ENCODE measurements at regions of chr13 and their contacts with region 1.

Region 1: DNA sequence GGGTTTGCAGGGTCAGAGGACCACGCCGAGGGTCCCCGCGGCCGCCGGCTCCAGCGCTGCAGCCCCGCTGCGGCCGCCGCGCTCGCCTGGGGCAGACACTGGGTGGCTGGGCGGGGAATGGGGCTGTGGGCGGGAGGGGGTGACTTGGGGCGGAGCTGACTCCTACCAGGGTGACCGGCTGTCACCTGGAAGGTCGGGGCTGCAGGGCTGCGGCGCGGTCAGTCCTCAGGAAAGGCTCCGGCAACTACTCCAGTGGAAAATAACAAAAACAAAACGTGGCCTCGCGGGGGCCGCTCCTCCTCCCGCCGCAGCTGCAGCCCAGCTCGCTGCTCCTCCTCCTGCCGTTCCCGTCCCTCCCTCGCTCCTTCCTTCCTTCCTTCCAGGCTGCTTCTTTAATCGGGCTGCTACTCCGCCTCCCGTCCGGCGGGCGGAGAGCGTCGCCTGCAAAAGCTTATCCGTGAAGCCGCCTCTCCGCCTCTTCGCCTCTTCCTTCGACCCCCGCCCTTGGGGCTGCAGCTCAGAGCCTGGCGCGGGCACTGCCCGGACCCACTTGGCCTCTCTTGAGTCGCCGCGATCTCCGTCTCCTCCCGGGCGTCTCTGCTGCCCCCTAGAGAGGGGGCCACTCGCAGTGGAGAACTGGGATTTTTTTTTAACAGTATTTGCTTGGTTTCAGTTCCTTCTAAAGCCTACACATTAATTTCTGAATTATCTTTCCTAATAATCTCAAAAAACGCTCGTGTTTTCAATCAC is at the start of gene TBC1D4:
- DNase-seq: peak; percentile 92
- H3K4me3 ChIP-seq: peak within 1 kb of the TSS; percentile 58 to 81 (median 73)
- H3K27ac ChIP-seq: peak within 1 kb of the TSS; percentile 69
- H3K4me1 ChIP-seq: peaks cover 31% of the 10 kb centered on the region
- H3K27me3 ChIP-seq: no peaks in the 10 kb centered on the region
- CTCF ChIP-seq: peak; percentile 76 to 84
- total RNA-seq, gene TBC1D4: 13.9 to 36.7 TPM

Region 2: DNA sequence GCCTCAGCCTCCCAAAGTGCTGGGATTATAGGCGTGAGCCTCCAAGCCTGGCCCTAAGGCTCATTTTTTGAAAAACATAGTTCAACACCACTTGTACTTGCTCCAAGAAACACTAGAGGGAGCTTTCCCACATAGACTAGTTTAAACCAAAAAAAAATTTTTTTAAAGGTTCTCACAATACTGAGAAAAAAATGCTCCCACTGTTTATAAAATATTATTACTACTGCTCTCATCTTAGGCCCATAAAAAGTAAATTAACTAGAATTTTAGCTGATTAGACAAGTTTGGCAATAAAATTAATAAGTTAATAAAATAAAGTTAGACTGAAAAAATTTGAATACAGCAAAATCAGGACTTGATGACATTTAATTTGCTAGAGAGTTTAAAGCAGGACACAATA is 109.7 kb before region 1 on chr13:
- CTCF ChIA-PET with region 1: interaction called, 11 read pairs
- dilution Hi-C with region 1: no loop called
- in situ Hi-C with region 1: loop called in 1 of 2 experiments (anchors 10 kb)
- intact Hi-C with region 1: loop called (anchors 1 kb)
- DNase-seq: no peak
- H3K4me3 ChIP-seq: no peak overlapping the region
- H3K27ac ChIP-seq: no peak overlapping the region
- H3K4me1 ChIP-seq: peaks cover 19% of the 10 kb centered on the region
- H3K27me3 ChIP-seq: no peaks in the 10 kb centered on the region
- CTCF ChIP-seq: peak; percentile 63 to 74

Region 3: GRCh38 chr13:75410207-75410606 is 72.0 kb before region 1 on chr13:
- CTCF ChIA-PET with region 1: no interaction called
- dilution Hi-C with region 1: no loop called
- in situ Hi-C with region 1: no loop called
- intact Hi-C with region 1: no loop called
- DNase-seq: no peak
- H3K4me3 ChIP-seq: no peak overlapping the region
- H3K27ac ChIP-seq: no peak overlapping the region
- H3K4me1 ChIP-seq: no peaks in the 10 kb centered on the region
- H3K27me3 ChIP-seq: no peaks in the 10 kb centered on the region
- CTCF ChIP-seq: no peak

Region 4: GRCh38 chr13:75425216-75426009 is 56.8 kb before region 1 on chr13:
- CTCF ChIA-PET with region 1: no interaction called
- dilution Hi-C with region 1: loop called (anchors 5 kb)
- in situ Hi-C with region 1: no loop called
- intact Hi-C with region 1: no loop called
- DNase-seq: no peak
- H3K4me3 ChIP-seq: no peak overlapping the region
- H3K27ac ChIP-seq: no peak overlapping the region
- H3K4me1 ChIP-seq: peaks cover 4% of the 10 kb centered on the region
- H3K27me3 ChIP-seq: no peaks in the 10 kb centered on the region
- CTCF ChIP-seq: no peak

Region 5: GRCh38 chr13:75512253-75512652 is 30.0 kb after region 1 on chr13:
- CTCF ChIA-PET with region 1: no interaction called
- dilution Hi-C with region 1: no loop called
- in situ Hi-C with region 1: no loop called
- intact Hi-C with region 1: no loop called
- DNase-seq: no peak
- H3K4me3 ChIP-seq: no peak overlapping the region
- H3K27ac ChIP-seq: no peak overlapping the region
- H3K4me1 ChIP-seq: peaks cover 1% of the 10 kb centered on the region
- H3K27me3 ChIP-seq: no peaks in the 10 kb centered on the region
- CTCF ChIP-seq: no peak

Region 6: GRCh38 chr13:75537401-75538365 is 55.4 kb after region 1 on chr13 and contains the start of gene COMMD6:
- CTCF ChIA-PET with region 1: no interaction called
- dilution Hi-C with region 1: no loop called
- in situ Hi-C with region 1: no loop called
- intact Hi-C with region 1: loop called (anchors 2 kb)
- DNase-seq: peak; percentile 86
- H3K4me3 ChIP-seq: peak within 1 kb of the TSS; percentile 62 to 93 (median 79)
- H3K27ac ChIP-seq: peak within 1 kb of the TSS; percentile 81
- H3K4me1 ChIP-seq: peaks cover 17% of the 10 kb centered on the region
- H3K27me3 ChIP-seq: no peaks in the 10 kb centered on the region
- CTCF ChIP-seq: peak in 1 of 2 donors; percentile 26
- total RNA-seq, gene COMMD6: 27.3 to 115 TPM

Region 7: GRCh38 chr13:75635828-75636435 is 153.7 kb after region 1 on chr13 and contains the start of gene LMO7:
- CTCF ChIA-PET with region 1: no interaction called
- dilution Hi-C with region 1: no loop called
- in situ Hi-C with region 1: no loop called
- intact Hi-C with region 1: no loop called
- DNase-seq: peak; percentile 27
- H3K4me3 ChIP-seq: peak within 1 kb of the TSS; percentile 66 to 85 (median 82)
- H3K27ac ChIP-seq: no peak within 1 kb of the TSS
- H3K4me1 ChIP-seq: peaks cover 28% of the 10 kb centered on the region
- H3K27me3 ChIP-seq: no peaks in the 10 kb centered on the region
- CTCF ChIP-seq: no peak
- total RNA-seq, gene LMO7: 26.4 to 44.8 TPM

Region 8: GRCh38 chr13:75666646-75667351 is 184.6 kb after region 1 on chr13:
- CTCF ChIA-PET with region 1: interaction called, 5 read pairs
- dilution Hi-C with region 1: no loop called
- in situ Hi-C with region 1: no loop called
- intact Hi-C with region 1: loop called (anchors 10 kb)
- DNase-seq: peak; percentile 90
- H3K4me3 ChIP-seq: peak overlapping the region in 1 of 3 experiments; percentile 4
- H3K27ac ChIP-seq: peak overlapping the region; percentile 55
- H3K4me1 ChIP-seq: peaks cover 6% of the 10 kb centered on the region
- H3K27me3 ChIP-seq: no peaks in the 10 kb centered on the region
- CTCF ChIP-seq: no peak

Region 9: GRCh38 chr13:76854894-76855293 is 1372.6 kb after region 1 on chr13:
- CTCF ChIA-PET with region 1: no interaction called
- dilution Hi-C with region 1: no loop called
- in situ Hi-C with region 1: no loop called
- intact Hi-C with region 1: no loop called
- DNase-seq: peak; percentile 46
- H3K4me3 ChIP-seq: no peak overlapping the region
- H3K27ac ChIP-seq: peak overlapping the region; percentile 46
- H3K4me1 ChIP-seq: peaks cover 41% of the 10 kb centered on the region
- H3K27me3 ChIP-seq: no peaks in the 10 kb centered on the region
- CTCF ChIP-seq: no peak